ENCODE measurements at regions of chr7 and their contacts with region 1.

Region 1: DNA sequence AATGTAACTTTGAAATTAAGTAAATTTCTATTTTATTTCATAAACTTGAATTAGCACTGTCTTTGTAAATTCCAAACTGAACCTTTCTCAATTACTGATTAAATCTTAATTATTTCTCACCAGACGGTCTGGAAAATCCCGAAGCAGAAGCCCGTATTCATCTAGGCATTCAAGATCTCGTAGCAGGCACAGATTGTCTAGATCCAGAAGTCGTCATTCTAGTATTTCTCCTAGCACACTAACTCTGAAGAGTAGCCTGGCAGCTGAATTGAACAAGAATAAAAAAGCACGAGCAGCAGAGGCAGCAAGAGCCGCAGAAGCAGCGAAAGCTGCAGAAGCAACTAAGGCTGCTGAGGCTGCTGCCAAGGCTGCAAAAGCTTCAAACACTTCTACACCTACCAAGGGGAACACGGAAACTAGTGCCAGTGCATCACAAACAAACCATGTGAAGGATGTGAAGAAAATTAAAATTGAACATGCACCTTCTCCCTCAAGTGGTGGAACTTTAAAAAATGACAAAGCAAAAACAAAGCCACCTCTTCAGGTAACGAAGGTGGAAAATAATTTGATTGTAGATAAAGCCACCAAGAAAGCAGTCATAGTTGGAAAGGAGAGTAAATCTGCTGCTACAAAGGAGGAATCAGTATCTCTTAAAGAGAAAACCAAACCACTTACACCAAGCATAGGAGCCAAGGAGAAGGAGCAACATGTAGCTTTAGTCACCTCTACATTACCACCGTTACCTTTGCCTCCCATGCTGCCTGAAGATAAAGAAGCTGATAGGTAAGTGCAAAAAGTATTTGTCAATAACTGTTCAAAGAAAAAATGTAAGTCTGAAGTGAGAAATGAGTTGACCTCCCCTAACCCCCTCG is 37.7 kb downstream of the CDK13 start:
- DNase-seq: peak in 8 of 14 experiments; percentile 9 to 67 (median 39)
- ATAC-seq: peak; percentile 94
- H3K4me3 ChIP-seq: no peak overlapping the region
- H3K4me3 Mint-ChIP-seq: peak overlapping the region; percentile 52
- H3K27ac ChIP-seq: no peak overlapping the region
- H3K27ac Mint-ChIP-seq: peak overlapping the region; percentile 74
- H3K4me1 ChIP-seq: peaks cover 23% of the 10 kb centered on the region
- H3K4me1 Mint-ChIP-seq: peaks cover 63% of the 10 kb centered on the region
- H3K27me3 ChIP-seq: no peaks in the 10 kb centered on the region
- H3K27me3 Mint-ChIP-seq: no peaks in the 10 kb centered on the region
- CTCF ChIP-seq: peak; percentile 27

Region 2: DNA sequence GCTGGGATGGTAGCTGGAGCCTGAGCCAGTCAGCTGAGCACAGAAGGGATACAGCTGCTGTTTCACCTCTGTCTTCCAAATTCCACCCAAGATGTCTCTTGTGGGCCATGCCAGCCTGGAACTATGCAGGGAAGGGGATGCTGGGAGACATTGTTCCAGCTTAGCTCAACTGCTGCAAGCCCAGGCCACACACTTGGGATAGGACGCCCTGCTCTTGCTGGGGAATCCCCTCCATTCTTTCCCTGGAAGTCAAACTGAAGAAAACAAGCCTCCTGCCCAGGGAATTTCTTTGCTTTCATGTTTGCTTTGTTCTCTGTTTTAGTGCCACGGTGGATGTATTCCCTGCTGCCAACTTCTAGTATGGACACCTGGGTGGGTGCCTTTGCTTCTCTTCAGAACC is 92.8 kb before region 1 on chr7:
- CTCF ChIA-PET with region 1: interaction called, 5 read pairs
- POLR2A ChIA-PET with region 1: interaction called, 5 read pairs
- intact Hi-C with region 1: loop called (anchors 1 to 2 kb)
- DNase-seq: no peak
- ATAC-seq: no peak
- H3K4me3 ChIP-seq: no peak overlapping the region
- H3K4me3 Mint-ChIP-seq: no peak overlapping the region
- H3K27ac ChIP-seq: no peak overlapping the region
- H3K27ac Mint-ChIP-seq: no peak overlapping the region
- H3K4me1 ChIP-seq: peaks cover 3% of the 10 kb centered on the region
- H3K4me1 Mint-ChIP-seq: no peaks in the 10 kb centered on the region
- H3K27me3 ChIP-seq: peaks cover 3 to 8% of the 10 kb centered on the region in 2 experiments
- H3K27me3 Mint-ChIP-seq: peaks cover 11% of the 10 kb centered on the region
- CTCF ChIP-seq: no peak

Region 3: DNA sequence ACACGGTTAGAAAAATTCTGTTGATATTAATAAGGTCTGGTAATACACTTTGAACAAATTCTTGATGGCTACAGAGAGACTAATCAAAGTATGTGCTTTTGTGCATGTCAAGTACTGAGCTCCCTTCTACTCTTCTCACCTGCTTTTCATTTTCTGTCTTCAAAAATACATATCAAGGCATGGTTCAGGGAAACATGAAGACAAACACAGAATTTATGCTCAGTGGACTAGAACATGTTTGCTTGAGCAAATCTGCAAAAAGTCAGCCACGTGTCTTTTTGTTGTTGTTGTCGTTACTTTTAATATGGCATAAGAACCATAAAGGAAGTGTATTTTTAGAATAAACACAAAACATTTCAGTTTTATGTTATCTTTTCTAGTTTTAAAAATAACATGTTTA is 15.8 kb before region 1 on chr7:
- CTCF ChIA-PET with region 1: interaction called, 5 read pairs
- POLR2A ChIA-PET with region 1: interaction called, 3 read pairs
- intact Hi-C with region 1: loop called in 1 of 2 experiments (anchors 2 kb)
- DNase-seq: no peak
- ATAC-seq: no peak
- H3K4me3 ChIP-seq: no peak overlapping the region
- H3K4me3 Mint-ChIP-seq: peak overlapping the region; percentile 23
- H3K27ac ChIP-seq: no peak overlapping the region
- H3K27ac Mint-ChIP-seq: peak overlapping the region; percentile 26
- H3K4me1 ChIP-seq: peaks cover 43% of the 10 kb centered on the region
- H3K4me1 Mint-ChIP-seq: peaks cover 75% of the 10 kb centered on the region
- H3K27me3 ChIP-seq: no peaks in the 10 kb centered on the region
- H3K27me3 Mint-ChIP-seq: no peaks in the 10 kb centered on the region
- CTCF ChIP-seq: no peak

Region 4: DNA sequence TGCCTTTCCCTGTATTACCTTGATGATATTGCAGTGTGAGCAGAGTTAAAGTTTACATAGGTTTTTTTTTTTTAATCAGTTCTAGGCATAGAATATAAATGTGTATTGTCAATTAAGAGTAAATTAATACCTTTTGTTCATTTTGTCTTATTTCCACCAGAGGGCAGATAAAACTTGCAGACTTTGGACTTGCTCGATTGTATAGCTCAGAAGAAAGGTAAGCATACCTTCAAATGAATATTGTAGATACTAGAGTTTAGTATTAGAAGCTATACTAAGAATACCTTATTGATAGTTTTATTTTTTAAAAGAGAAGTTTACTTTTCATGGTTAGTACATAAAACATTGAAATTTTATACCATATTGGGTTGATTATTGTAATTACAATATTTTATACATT is 59.9 kb after region 1 on chr7:
- CTCF ChIA-PET with region 1: interaction called, 4 read pairs
- POLR2A ChIA-PET with region 1: no interaction called
- intact Hi-C with region 1: loop called in 1 of 2 experiments (anchors 5 kb)
- DNase-seq: no peak
- ATAC-seq: no peak
- H3K4me3 ChIP-seq: no peak overlapping the region
- H3K4me3 Mint-ChIP-seq: no peak overlapping the region
- H3K27ac ChIP-seq: no peak overlapping the region
- H3K27ac Mint-ChIP-seq: no peak overlapping the region
- H3K4me1 ChIP-seq: no peaks in the 10 kb centered on the region
- H3K4me1 Mint-ChIP-seq: peaks cover 4% of the 10 kb centered on the region
- H3K27me3 ChIP-seq: no peaks in the 10 kb centered on the region
- H3K27me3 Mint-ChIP-seq: no peaks in the 10 kb centered on the region
- CTCF ChIP-seq: no peak

Measured in CD4-positive, alpha-beta T cell (primary cell).